HCT116 (cell line): ENCODE measurements at regions of chr17 and their contacts with region 1.

Region 1: DNA sequence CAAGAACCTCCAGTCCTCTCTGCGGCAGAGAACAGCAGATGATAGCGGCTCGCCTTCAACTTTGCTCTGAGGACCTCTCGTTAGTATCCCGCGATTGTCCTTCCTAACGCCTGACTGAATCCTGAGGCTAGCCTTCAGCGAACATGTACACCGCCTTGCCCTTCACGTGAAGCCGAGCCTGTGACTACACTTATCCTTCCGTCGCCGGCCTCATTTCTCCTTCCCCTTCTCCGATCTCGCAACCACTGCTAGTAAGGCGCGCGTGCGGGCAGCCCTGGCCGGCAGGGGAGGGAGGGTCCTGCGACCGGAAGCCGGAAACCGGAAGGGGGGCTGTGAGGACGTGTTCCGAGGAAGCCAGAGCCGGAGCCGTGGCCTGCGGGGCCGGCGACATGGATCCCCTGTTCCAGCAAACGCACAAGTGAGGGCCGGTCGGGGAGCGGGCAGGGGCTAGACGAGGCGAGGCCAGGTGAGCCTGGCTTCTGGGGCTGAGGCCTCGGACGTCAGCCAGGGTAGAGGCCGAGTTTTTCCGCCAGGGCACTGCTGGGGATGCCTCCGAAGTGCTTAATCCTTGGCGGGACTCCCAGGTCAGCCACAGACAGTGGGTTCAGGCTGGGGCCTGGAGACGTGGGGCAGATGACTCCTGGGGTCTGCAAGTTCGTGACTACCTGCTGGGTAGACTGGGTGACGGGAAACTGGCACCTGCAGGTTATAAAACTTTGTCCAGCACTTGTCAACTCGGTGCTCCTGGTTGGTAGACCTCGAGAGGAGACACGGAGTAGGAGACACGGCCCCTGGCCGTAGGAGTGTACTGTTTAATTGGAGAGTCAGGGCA is at the start of gene GOSR2:
- DNase-seq: peak; percentile 89
- ATAC-seq: peak; percentile 97
- H3K4me3 ChIP-seq: peak within 1 kb of the TSS; percentile 91 to 99
- H3K27ac ChIP-seq: peak within 1 kb of the TSS; percentile 80
- H3K4me1 ChIP-seq: peaks cover 7 to 10% of the 10 kb centered on the region in 2 experiments
- H3K27me3 ChIP-seq: no peaks in the 10 kb centered on the region
- CTCF ChIP-seq: no peak
- POLR2A ChIP-seq: peak; percentile 89
- RAD21 ChIP-seq: no peak
- total RNA-seq, gene GOSR2: 52.9 TPM

Region 2: DNA sequence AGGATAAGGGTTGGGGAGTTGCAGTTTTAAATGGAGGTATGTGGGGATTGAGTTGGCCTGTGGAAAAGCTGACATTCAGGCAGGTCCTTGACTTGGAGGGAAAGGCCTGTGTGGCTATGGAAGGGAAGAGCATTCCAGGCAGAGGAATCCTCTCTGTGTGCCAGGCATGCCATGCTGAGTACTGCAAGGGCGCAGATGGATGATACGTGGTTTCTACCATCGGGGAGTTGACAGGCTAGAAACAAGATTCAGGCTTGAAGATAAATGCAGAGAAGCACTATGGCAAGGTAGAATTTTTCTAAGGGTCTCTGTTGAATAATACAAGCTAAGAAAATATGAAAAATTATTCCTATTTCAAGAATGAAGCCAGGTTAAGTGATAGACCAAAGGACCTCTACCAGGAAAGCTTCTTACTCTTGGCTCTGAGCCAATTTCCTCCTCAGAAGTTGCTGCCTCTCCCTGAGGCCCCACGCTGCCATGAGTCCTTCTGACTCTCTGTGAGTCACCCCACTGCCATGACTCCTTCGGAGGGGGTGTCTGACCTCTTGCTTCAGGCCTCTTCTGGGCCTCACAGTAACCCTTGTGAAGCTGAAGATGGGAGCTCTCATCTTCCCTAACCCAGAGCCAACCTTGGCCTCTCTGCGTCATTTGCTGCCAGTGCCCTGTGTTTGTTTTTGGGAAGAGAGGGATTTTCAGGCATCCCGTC is 180.3 kb before region 1 on chr17:
- CTCF ChIA-PET with region 1: no interaction called
- POLR2A ChIA-PET with region 1: no interaction called
- RAD21 ChIA-PET with region 1: no interaction called
- intact Hi-C with region 1: no loop called
- DNase-seq: peak; percentile 57
- ATAC-seq: peak; percentile 95
- H3K4me3 ChIP-seq: no peak overlapping the region
- H3K27ac ChIP-seq: no peak overlapping the region
- H3K4me1 ChIP-seq: peaks cover 11 to 17% of the 10 kb centered on the region in 2 experiments
- H3K27me3 ChIP-seq: no peaks in the 10 kb centered on the region
- CTCF ChIP-seq: no peak
- POLR2A ChIP-seq: no peak
- RAD21 ChIP-seq: 0 out of 2 replicates have a peak, but pooled peaks have one; percentile 7

Region 3: DNA sequence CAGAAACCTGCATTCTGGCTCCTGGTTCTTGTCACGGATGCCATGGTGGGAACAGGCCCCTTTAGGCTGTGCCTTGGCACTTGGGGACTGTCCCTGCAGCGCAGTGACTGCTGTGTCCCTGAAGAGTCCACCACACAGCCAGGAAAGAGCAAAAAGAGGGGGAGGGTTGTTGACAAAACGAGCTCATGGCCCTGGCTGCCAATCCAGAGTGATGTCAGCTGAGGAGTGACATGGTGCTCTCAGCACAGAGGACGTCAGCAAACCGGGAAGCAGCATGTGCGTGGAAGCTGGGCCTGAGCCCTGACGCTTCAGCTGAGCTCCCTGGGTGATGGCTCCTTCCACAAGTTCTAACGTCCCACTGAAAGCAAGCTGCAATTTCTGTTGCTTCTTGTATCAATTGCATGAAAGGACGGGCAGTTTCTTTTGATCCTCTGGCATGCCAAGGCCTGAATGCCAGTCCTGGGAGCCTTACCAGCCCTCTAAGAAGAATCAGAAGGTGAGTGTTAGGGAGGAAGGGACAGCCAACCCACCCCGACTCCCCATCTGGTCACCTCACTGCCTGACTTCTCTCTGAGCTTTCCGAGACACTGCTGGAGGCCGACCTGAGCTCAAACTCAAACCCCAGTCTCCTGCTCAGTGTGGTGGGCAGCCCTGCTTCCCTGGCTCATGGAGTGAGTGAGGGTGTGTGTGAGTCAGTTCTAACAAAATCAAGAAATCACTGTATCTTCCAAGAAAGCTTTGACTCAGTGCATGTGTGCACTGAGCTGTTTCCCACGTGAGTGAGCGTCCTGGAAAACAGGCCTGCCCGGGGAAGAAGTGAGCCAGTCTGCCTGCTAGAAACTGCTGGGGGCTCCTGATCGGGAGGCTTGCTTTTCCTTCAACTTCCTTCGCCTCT is 89.8 kb before region 1 on chr17:
- CTCF ChIA-PET with region 1: no interaction called
- POLR2A ChIA-PET with region 1: no interaction called
- RAD21 ChIA-PET with region 1: no interaction called
- intact Hi-C with region 1: no loop called
- DNase-seq: no peak
- ATAC-seq: no peak
- H3K4me3 ChIP-seq: no peak overlapping the region
- H3K27ac ChIP-seq: no peak overlapping the region
- H3K4me1 ChIP-seq: peaks cover 3 to 7% of the 10 kb centered on the region in 2 experiments; a peak in 3 of 4 replicates
- H3K27me3 ChIP-seq: no peaks in the 10 kb centered on the region
- CTCF ChIP-seq: no peak
- POLR2A ChIP-seq: no peak
- RAD21 ChIP-seq: no peak

Region 4: GRCh38 chr17:46898364-46898763 is 24.7 kb before region 1 on chr17:
- CTCF ChIA-PET with region 1: no interaction called
- POLR2A ChIA-PET with region 1: no interaction called
- RAD21 ChIA-PET with region 1: no interaction called
- intact Hi-C with region 1: loop called (anchors 2 kb)
- DNase-seq: no peak
- ATAC-seq: no peak
- H3K4me3 ChIP-seq: no peak overlapping the region
- H3K27ac ChIP-seq: no peak overlapping the region
- H3K4me1 ChIP-seq: no peaks in the 10 kb centered on the region
- H3K27me3 ChIP-seq: no peaks in the 10 kb centered on the region
- CTCF ChIP-seq: no peak
- POLR2A ChIP-seq: no peak
- RAD21 ChIP-seq: no peak

Region 5: DNA sequence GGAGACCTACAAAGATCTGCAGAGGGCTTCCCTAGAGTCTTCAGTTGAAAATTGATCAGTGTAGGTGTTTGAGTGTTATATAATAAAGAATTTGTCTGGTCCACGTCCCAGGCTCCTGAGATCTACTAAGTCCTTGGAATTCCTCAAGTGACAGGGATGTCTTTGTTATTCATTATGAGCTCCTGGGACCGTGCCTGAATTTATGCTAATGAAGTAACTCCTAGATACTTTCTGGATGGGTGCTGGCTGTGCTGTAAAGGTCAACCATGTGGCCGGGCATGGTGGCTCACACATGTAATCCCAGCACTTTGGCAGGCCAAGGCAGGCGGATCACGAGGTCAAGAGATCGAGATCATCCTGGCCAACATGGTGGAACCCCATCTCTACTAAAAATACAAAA is 222.3 kb after region 1 on chr17:
- CTCF ChIA-PET with region 1: no interaction called
- POLR2A ChIA-PET with region 1: no interaction called
- RAD21 ChIA-PET with region 1: no interaction called
- intact Hi-C with region 1: no loop called
- DNase-seq: no peak
- ATAC-seq: no peak
- H3K4me3 ChIP-seq: no peak overlapping the region
- H3K27ac ChIP-seq: no peak overlapping the region
- H3K4me1 ChIP-seq: no peaks in the 10 kb centered on the region
- H3K27me3 ChIP-seq: no peaks in the 10 kb centered on the region
- CTCF ChIP-seq: no peak
- POLR2A ChIP-seq: no peak
- RAD21 ChIP-seq: no peak